Dorsolateral prefrontal cortex (tissue), 120 donors: ENCODE measurements at regions of chr14 and their contacts with region 1.

Region 1: DNA sequence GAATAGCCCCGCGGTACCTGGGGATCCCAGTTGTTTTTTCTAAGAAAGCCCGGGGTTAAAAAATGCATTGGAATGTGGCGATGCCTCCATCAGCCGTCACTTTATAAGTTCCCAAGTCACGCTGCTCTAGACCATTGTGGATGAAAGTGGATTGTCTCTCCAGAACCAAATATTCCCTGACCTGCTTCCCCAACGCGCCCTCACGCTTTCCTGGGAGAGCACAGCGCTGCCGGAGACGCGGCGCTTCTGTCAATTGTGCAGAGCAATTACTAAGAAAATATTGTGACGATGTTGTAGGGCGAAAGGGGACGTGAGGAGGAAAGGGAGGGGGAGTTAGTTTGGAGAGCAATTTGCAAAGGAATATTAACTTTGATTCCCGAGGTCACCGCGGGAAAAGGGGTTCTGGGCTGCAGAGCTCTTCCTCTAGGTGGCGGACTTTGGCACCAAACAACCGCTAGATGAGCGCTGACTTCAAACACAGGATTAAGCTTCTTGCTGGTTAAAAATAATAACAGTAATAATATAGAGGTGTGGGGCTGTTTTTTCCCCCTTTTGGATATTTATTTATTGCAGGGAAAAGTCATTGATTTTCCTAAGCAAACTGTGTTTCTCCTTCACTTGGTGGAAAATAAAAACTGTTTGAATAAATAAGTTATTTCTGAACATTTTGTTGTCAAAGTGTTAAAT is 9.6 kb upstream of the FOXG1 start:
- DNase-seq: peak in 3 of 10 donors; percentile 46 to 56 (median 55)
- H3K4me3 ChIP-seq: peak overlapping the region in 56 of 59 donors; percentile 15 to 80 (median 42)
- H3K27ac ChIP-seq: peak overlapping the region in 54 of 59 donors; percentile 1 to 98 (median 93)
- H3K27me3 ChIP-seq: peaks cover 0 to 83% (median 33%) of the 10 kb centered on the region in 45 donors
- CTCF ChIP-seq: peak; percentile 37 to 77 (median 66)

Region 2: GRCh38 chr14:28911521-28911920 is 154.5 kb after region 1 on chr14:
- intact Hi-C with region 1: no loop called
- DNase-seq: no peak
- H3K4me3 ChIP-seq: no peak overlapping the region
- H3K27ac ChIP-seq: no peak overlapping the region
- H3K27me3 ChIP-seq: no peaks in the 10 kb centered on the region
- CTCF ChIP-seq: no peak

Region 3: DNA sequence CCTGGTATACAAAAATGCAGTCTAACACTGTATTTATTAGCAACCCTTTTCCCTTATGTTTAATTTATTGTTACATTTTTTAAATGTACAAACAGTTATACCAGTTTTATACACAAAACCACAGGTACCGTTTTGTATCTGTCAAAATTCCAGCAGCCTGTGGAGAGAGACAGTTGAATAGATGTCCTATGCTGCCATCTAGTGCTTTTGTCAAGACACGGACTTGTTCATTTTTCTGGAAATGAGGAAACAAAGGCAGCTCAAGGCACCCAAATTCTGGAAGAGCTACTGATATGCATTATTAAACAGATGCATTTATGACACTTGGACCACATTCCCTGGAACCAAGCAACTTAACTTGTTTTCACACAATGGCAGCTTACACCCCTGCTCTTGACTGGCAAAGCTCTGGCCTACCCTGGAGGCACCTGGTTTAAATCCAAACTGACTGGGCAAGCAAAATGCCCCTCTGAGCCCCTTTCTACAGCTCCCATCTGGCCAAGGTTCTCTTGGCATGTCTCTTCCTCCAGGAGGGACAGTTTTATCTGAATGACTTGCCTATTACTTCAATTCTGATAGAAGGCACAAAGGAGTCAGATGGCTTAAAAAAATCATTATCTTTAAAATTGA is 1457.5 kb after region 1 on chr14:
- intact Hi-C with region 1: loop called (anchors 5 kb)
- DNase-seq: no peak
- H3K4me3 ChIP-seq: peak overlapping the region in 4 of 59 donors; percentile 2 to 29 (median 14)
- H3K27ac ChIP-seq: peak overlapping the region in 6 of 59 donors; percentile 11 to 35 (median 26)
- H3K27me3 ChIP-seq: no peaks in the 10 kb centered on the region
- CTCF ChIP-seq: peak; percentile 53 to 83 (median 70)